B cell (primary cell): ENCODE measurements at regions of chr12 and their contacts with region 1.

Region 1: GRCh38 chr12:27014085-27014858 is at the start of gene TM7SF3:
- DNase-seq: peak; percentile 97
- ATAC-seq: peak; percentile 93
- H3K4me3 ChIP-seq: peak within 1 kb of the TSS; percentile 78 to 86 (median 83)
- H3K4me3 Mint-ChIP-seq: peak within 1 kb of the TSS; percentile 96
- H3K27ac ChIP-seq: peak within 1 kb of the TSS; percentile 90 to 91
- H3K27ac Mint-ChIP-seq: peak within 1 kb of the TSS; percentile 96
- H3K4me1 ChIP-seq: peaks cover 24 to 25% of the 10 kb centered on the region in 2 donors
- H3K4me1 Mint-ChIP-seq: peaks cover 47% of the 10 kb centered on the region
- H3K27me3 ChIP-seq: no peaks in the 10 kb centered on the region
- H3K27me3 Mint-ChIP-seq: no peaks in the 10 kb centered on the region
- CTCF ChIP-seq: peak; percentile 92
- total RNA-seq, gene TM7SF3: 33.5 and 42.0 TPM in 2 replicates

Region 2: DNA sequence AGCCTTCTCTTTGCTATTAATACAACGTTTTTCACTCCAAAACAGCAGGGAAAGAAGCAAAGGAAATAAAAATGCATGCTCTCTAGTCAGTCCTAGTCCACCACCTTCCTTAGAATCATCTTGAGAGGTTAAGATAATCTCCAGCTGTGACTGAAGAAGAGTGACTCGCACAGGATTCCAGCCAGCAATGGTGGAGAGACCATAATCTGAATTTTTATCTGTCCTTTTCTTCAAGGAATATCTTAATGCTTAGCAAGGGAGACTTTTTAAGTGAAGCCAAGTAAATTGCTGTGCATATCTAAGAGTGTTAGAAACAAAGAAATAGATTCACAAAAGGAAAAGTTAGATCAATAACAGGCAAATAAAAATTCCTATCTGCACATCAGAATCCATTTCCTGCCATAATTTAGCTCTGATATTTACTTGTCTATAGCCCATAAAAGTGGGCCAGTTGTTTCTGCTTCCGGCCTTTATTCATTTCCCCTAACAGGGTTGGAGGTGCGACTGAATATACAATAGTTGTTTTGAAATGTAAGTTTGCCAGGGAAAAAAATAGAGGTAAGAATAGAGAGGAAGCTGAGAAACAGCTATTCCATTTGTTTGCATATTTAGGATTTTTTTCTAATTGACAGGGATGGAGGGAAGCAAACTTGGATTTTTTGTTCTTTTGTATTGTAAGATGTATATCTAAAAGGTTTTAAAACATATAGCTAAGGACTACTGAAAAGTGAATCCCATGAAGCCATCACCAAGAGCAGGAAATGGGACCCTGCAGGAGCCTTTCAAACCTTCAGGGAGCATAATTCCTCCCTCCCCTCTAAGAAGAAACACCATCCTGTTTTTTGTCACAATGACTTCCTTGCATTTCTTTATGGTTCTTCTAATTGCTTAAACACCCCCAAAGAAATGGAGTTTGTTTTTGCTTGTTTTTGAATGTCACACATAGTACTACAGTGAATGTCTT is 335.3 kb before region 1 on chr12:
- CTCF ChIA-PET with region 1: no interaction called
- POLR2A ChIA-PET with region 1: no interaction called
- intact Hi-C with region 1: no loop called
- DNase-seq: no peak
- ATAC-seq: no peak
- H3K4me3 ChIP-seq: no peak overlapping the region
- H3K4me3 Mint-ChIP-seq: no peak overlapping the region
- H3K27ac ChIP-seq: no peak overlapping the region
- H3K27ac Mint-ChIP-seq: no peak overlapping the region
- H3K4me1 ChIP-seq: no peaks in the 10 kb centered on the region
- H3K4me1 Mint-ChIP-seq: no peaks in the 10 kb centered on the region
- H3K27me3 ChIP-seq: no peaks in the 10 kb centered on the region
- H3K27me3 Mint-ChIP-seq: no peaks in the 10 kb centered on the region
- CTCF ChIP-seq: no peak

Region 3: GRCh38 chr12:26832822-26833742 is 181.2 kb before region 1 on chr12 and contains the start of gene ITPR2:
- CTCF ChIA-PET with region 1: interaction called, 17 read pairs
- POLR2A ChIA-PET with region 1: interaction called, 4 read pairs
- intact Hi-C with region 1: loop called (anchors 1 kb)
- DNase-seq: peak; percentile 95
- ATAC-seq: peak; percentile 88
- H3K4me3 ChIP-seq: peak within 1 kb of the TSS; percentile 67 to 97 (median 95)
- H3K4me3 Mint-ChIP-seq: peak within 1 kb of the TSS; percentile 98
- H3K27ac ChIP-seq: peak within 1 kb of the TSS; percentile 90 to 92
- H3K27ac Mint-ChIP-seq: peak within 1 kb of the TSS; percentile 100
- H3K4me1 ChIP-seq: peaks cover 15 to 21% of the 10 kb centered on the region in 2 donors
- H3K4me1 Mint-ChIP-seq: peaks cover 49% of the 10 kb centered on the region
- H3K27me3 ChIP-seq: no peaks in the 10 kb centered on the region
- H3K27me3 Mint-ChIP-seq: no peaks in the 10 kb centered on the region
- CTCF ChIP-seq: peak; percentile 56
- total RNA-seq, gene ITPR2: 113 and 122 TPM in 2 replicates

Region 4: DNA sequence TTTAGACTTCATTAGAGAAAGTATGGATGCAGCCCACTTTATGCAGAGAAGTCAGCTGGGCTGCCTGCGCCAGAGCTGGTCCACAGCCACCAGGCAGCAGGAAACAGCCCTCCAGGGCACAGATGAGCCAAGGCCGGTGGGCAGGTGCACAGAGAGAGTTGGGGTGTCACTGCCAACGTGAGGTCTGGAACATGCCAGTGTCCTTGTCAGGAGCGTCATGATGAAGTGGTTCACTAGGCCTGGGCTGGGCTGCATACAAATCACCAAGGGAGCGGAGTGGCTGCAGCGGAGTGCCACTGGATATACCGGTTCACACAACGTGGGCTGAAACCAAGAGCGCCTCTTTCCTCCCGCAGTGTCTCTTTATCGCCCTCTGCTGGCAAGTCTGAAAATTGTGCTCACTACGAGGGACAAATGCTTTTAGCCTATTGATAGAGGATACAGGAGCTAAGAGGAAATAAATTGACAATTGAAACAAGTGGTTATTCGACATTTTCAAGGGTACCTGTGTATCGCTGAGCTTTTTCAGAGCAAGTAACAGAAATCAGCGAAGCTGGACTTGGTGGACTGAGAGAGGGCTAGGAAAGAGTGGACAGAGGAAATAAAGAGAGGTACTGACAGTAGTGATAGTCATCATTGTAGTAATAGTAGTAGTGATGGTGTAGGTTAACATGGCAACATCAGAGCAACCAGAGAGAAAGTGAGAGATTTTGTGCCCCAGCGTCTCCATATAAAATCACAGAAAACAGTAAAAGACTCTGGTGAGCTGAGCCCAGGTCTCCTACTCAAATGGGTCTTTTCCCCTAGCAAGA is 129.3 kb before region 1 on chr12:
- CTCF ChIA-PET with region 1: interaction called, 20 read pairs
- POLR2A ChIA-PET with region 1: no interaction called
- intact Hi-C with region 1: no loop called
- DNase-seq: peak; percentile 89
- ATAC-seq: peak; percentile 96
- H3K4me3 ChIP-seq: peak overlapping the region in 2 of 5 experiments; percentile 3 to 26
- H3K4me3 Mint-ChIP-seq: peak overlapping the region; percentile 67
- H3K27ac ChIP-seq: no peak overlapping the region
- H3K27ac Mint-ChIP-seq: no peak overlapping the region
- H3K4me1 ChIP-seq: peaks cover 4 to 8% of the 10 kb centered on the region in 2 donors
- H3K4me1 Mint-ChIP-seq: peaks cover 9% of the 10 kb centered on the region
- H3K27me3 ChIP-seq: no peaks in the 10 kb centered on the region
- H3K27me3 Mint-ChIP-seq: no peaks in the 10 kb centered on the region
- CTCF ChIP-seq: peak; percentile 97

Region 5: DNA sequence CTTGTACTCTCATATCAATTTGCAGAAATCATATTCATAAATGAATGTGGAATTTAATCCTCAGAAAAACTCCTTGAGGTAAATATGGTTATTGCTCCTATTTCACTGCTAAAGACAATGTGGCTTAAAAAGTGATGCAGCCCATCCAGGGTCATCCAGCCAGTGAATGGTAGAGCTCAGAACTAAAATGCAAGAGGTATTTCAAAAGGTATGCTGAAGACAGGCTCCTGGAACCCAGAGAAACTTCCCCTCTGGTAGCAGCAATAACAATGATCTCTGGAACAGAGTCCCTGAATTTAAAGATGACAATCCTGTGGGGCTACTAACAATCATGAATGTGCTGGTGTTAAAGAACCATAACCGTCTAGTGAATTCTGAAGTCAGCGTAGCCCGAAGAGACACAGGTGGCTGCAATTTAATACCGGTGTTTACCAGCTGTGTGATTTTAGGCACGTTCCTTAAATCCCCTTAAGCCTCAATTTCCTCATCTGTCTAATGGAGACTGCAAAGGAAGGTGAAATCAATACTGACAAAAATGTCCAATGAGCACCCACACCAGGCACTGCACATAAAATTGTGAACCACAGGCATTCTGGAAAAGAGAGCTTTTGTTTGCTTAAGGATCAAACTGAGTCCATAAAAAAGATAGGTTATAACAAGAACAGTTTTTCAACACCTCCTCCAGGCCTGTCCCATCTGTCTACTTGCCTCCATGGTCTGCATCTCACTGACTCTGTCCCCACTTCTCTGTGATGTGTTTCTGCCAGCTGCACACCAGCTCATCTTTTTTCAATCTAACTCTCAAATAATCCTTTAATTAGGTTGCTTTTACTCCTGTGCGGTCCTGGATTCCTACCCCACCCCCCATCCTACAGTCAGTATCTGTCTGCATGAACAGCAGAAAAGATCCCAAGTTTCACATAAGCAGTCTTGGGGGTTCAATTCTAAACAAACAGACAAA is 10.6 kb before region 1 on chr12:
- CTCF ChIA-PET with region 1: interaction called, 11 read pairs
- POLR2A ChIA-PET with region 1: no interaction called
- intact Hi-C with region 1: no loop called
- DNase-seq: no peak
- ATAC-seq: no peak
- H3K4me3 ChIP-seq: no peak overlapping the region
- H3K4me3 Mint-ChIP-seq: no peak overlapping the region
- H3K27ac ChIP-seq: no peak overlapping the region
- H3K27ac Mint-ChIP-seq: no peak overlapping the region
- H3K4me1 ChIP-seq: peaks cover 14 to 31% of the 10 kb centered on the region in 2 donors
- H3K4me1 Mint-ChIP-seq: peaks cover 51% of the 10 kb centered on the region
- H3K27me3 ChIP-seq: no peaks in the 10 kb centered on the region
- H3K27me3 Mint-ChIP-seq: no peaks in the 10 kb centered on the region
- CTCF ChIP-seq: no peak

Region 6: GRCh38 chr12:27142101-27142721 is 127.9 kb after region 1 on chr12:
- CTCF ChIA-PET with region 1: interaction called, 18 read pairs
- POLR2A ChIA-PET with region 1: no interaction called
- intact Hi-C with region 1: loop called (anchors 1 kb)
- DNase-seq: peak; percentile 66
- ATAC-seq: peak; percentile 63
- H3K4me3 ChIP-seq: no peak overlapping the region
- H3K4me3 Mint-ChIP-seq: no peak overlapping the region
- H3K27ac ChIP-seq: no peak overlapping the region
- H3K27ac Mint-ChIP-seq: no peak overlapping the region
- H3K4me1 ChIP-seq: no peaks in the 10 kb centered on the region
- H3K4me1 Mint-ChIP-seq: peaks cover 8% of the 10 kb centered on the region
- H3K27me3 ChIP-seq: no peaks in the 10 kb centered on the region
- H3K27me3 Mint-ChIP-seq: no peaks in the 10 kb centered on the region
- CTCF ChIP-seq: peak; percentile 83

Region 7: GRCh38 chr12:27207615-27208413 is 193.5 kb after region 1 on chr12:
- CTCF ChIA-PET with region 1: no interaction called
- POLR2A ChIA-PET with region 1: no interaction called
- intact Hi-C with region 1: no loop called
- DNase-seq: no peak
- ATAC-seq: no peak
- H3K4me3 ChIP-seq: no peak overlapping the region
- H3K4me3 Mint-ChIP-seq: no peak overlapping the region
- H3K27ac ChIP-seq: no peak overlapping the region
- H3K27ac Mint-ChIP-seq: no peak overlapping the region
- H3K4me1 ChIP-seq: peaks cover 0 to 3% of the 10 kb centered on the region in 2 donors
- H3K4me1 Mint-ChIP-seq: peaks cover 6% of the 10 kb centered on the region
- H3K27me3 ChIP-seq: no peaks in the 10 kb centered on the region
- H3K27me3 Mint-ChIP-seq: no peaks in the 10 kb centered on the region
- CTCF ChIP-seq: no peak

Region 8: DNA sequence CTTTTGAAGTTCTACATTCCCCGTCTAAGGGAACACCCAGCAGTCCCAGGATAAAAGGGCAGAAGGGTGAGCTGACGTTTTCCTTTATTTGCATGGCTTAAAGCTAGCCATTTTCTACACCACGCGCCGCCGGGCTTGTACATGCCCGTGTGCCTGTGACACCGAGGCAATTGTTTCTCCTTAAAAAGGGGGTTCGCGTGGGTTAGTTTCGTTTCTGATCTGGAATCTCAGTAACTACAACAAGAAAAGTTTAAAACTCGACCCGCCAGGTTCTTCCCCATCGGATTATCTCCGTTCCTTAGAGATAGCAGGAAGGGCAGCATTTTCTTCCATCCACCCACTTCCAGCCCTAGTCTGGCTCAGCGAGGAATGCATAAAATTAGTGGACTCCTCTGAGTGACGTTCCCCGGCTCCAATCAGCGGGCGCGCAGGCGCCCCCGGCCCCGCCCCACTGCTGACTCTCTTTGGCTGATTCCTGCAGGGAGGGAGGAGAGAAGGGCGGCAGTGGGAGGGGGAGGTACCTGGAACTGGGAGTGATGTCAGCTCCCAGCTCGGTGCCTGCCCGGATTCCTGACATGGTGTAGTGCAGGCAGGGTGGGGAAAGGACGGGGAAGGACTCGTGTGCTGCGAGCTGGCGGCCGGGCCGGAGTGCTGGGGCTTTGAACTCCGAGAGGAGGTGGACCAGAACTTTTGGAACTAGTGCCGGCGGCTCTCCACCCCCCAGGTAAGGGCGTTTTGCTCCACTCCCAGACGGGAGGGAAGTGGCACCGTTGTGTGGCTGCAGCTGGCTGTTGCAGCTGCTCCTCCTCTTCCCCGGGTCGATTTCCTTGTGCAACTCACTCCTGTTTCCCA is 509.6 kb after region 1 on chr12 and contains the start of gene PPFIBP1:
- CTCF ChIA-PET with region 1: no interaction called
- POLR2A ChIA-PET with region 1: no interaction called
- intact Hi-C with region 1: loop called (anchors 5 kb)
- DNase-seq: peak; percentile 95
- ATAC-seq: peak; percentile 99
- H3K4me3 ChIP-seq: peak within 1 kb of the TSS; percentile 80 to 98 (median 87)
- H3K4me3 Mint-ChIP-seq: peak within 1 kb of the TSS; percentile 98
- H3K27ac ChIP-seq: peak within 1 kb of the TSS; percentile 79 to 83
- H3K27ac Mint-ChIP-seq: peak within 1 kb of the TSS; percentile 95
- H3K4me1 ChIP-seq: peaks cover 15 to 20% of the 10 kb centered on the region in 2 donors
- H3K4me1 Mint-ChIP-seq: peaks cover 28% of the 10 kb centered on the region
- H3K27me3 ChIP-seq: no peaks in the 10 kb centered on the region
- H3K27me3 Mint-ChIP-seq: peaks cover 9% of the 10 kb centered on the region
- CTCF ChIP-seq: no peak
- total RNA-seq, gene PPFIBP1: 11.1 and 15.0 TPM in 2 replicates